ENCODE measurements at regions of chr2 and their contacts with region 1.

Region 1: DNA sequence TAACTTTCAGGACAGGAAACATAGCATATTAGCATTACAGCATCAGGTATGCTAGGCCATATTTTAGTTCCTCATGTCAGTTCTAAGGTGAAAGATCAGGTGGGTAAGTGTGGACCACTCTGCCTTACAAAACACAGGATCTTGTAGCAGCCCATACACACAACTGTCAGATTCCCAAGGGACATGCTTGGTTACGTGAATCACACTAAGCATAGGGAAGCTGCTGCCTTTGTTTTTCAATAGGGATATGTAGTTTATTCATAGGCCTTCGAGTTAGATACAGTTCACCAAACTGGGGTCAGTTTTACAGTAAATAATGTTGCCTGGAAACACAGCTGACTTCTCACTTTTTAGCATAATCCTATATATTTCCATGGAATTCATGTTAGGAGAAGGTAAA is 116.1 kb upstream of the OTX1 start:
- DNase-seq: no peak
- ATAC-seq: no peak
- H3K4me3 ChIP-seq: no peak overlapping the region
- H3K27ac ChIP-seq: no peak overlapping the region
- H3K4me1 ChIP-seq: no peaks in the 10 kb centered on the region
- H3K27me3 ChIP-seq: no peaks in the 10 kb centered on the region
- CTCF ChIP-seq: no peak

Region 2: DNA sequence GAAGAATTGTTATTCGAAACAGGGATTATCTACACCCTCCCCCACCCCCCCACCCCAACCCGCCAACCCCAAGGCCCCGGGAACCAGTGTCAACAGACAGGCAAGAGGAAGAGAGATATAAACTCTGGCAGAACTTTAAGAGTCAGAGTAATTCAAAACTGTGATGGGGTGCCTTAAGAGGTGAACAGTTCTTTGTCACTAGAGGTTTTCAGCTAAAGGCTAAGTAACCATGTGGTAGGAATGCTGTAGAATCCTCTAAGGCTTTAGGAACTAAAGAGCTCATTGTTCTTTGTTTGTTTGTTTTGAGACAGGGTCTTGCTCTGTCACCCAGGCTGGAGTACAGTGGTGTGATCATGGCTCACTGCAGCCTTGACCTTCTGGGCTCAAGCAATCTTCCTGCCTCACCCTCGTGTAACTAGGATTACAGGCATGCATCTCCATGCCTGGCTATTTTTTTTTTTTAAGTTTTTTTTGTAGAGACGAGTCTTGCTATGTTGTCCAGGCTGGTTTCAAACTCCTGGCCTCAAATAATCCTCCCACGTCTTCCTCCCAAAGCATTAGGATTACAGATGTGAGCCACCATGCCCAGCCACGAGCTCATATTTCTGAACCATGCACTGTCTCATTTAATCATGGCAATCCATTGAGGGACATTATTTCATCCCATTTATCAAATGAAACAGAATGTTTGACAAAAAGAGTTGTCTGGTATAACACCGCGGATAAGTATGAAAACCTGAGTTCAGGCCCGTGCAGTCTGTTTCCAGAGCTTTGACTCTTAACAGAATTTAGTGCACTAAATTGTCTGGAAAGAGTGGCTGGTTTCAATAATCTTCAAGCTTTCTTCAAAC is 407.8 kb before region 1 on chr2:
- CTCF ChIA-PET with region 1: no interaction called
- POLR2A ChIA-PET with region 1: interaction called, 11 read pairs
- in situ Hi-C with region 1: no loop called
- intact Hi-C with region 1: no loop called
- DNase-seq: no peak
- ATAC-seq: no peak
- H3K4me3 ChIP-seq: no peak overlapping the region
- H3K27ac ChIP-seq: no peak overlapping the region
- H3K4me1 ChIP-seq: no peaks in the 10 kb centered on the region
- H3K27me3 ChIP-seq: no peaks in the 10 kb centered on the region
- CTCF ChIP-seq: no peak

Region 3: DNA sequence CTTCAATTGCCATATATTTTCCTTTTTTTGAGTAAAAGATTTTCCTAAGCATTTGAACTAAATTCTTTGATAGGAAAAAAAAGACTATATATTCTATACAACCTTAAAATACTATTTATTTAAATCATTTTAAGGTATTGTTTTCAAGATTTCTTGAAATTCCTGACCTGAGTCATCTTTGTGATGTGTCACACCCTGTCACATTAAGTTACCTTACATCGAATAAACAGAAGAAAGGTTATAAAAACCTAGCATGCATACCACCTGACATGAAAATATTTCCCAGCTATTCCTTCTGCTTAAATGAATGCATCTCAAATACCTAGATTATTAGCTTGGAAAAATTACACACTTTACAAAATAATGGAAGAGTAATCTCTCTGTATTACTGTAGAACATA is 291.8 kb after region 1 on chr2:
- CTCF ChIA-PET with region 1: no interaction called
- POLR2A ChIA-PET with region 1: no interaction called
- in situ Hi-C with region 1: no loop called
- intact Hi-C with region 1: no loop called
- DNase-seq: no peak
- ATAC-seq: no peak
- H3K4me3 ChIP-seq: no peak overlapping the region
- H3K27ac ChIP-seq: no peak overlapping the region
- H3K4me1 ChIP-seq: no peaks in the 10 kb centered on the region
- H3K27me3 ChIP-seq: no peaks in the 10 kb centered on the region
- CTCF ChIP-seq: no peak